Activated CD4-positive, alpha-beta memory T cell treated with anti-CD3 and anti-CD28 coated beads, Interleukin-2, amount 10 ng/mL, durations not matched to agents 7 days and 5 days (primary cell): ENCODE measurements at regions of chr9 and their contacts with region 1.

Region 1: GRCh38 chr9:114930056-114930812 is at the start of gene TNFSF8:
- DNase-seq: peak; percentile 83
- H3K4me3 Mint-ChIP-seq: peak within 1 kb of the TSS; percentile 94
- H3K27ac Mint-ChIP-seq: peak within 1 kb of the TSS; percentile 96
- H3K4me1 Mint-ChIP-seq: peaks cover 53% of the 10 kb centered on the region
- H3K27me3 Mint-ChIP-seq: peaks cover 2% of the 10 kb centered on the region
- total RNA-seq, gene TNFSF8: 34.6 to 34.8 TPM

Region 2: GRCh38 chr9:114385412-114386181 is 544.6 kb before region 1 on chr9:
- CTCF ChIA-PET with region 1: interaction called, 3 read pairs
- POLR2A ChIA-PET with region 1: interaction called, 28 read pairs
- DNase-seq: peak; percentile 93
- H3K4me3 Mint-ChIP-seq: peak overlapping the region; percentile 100
- H3K27ac Mint-ChIP-seq: peak overlapping the region; percentile 98
- H3K4me1 Mint-ChIP-seq: peaks cover 58% of the 10 kb centered on the region
- H3K27me3 Mint-ChIP-seq: no peaks in the 10 kb centered on the region

Region 3: DNA sequence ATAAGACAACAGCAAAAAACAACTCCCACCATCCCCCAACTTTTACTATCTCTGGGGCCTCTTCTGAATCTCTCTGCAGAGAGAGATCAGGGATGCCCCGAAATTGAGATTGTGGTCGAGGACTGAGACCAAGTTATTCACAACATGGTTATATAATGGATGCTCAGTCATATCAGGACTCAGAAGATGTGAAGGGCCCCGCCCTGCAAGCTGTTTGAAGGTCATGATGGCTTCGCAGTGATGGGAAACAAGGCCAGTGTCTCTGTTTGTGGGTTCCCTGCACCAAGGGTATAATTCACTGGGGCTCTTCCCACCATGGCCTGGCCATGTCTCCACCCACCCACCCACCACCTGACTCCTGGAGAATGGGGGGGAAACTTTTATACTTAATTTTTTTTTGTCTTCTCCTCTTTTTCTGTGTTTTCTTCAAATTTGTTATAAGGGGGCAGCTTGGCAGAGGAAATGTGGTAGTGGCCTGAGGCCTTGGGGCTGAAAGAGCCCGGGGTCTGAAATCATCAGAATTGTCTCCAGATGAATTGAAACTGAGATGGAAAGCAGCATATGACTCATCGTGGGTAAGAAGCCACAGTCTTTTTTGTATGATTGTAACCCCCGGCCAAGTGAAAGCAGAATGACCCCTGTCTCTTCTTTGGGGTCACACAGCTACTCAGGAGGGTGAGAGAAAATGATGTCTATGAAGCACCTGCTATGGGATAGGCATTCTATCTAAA is 233.3 kb before region 1 on chr9:
- CTCF ChIA-PET with region 1: interaction called, 3 read pairs
- POLR2A ChIA-PET with region 1: interaction called, 106 read pairs
- DNase-seq: peak; percentile 85
- H3K4me3 Mint-ChIP-seq: peak overlapping the region; percentile 39
- H3K27ac Mint-ChIP-seq: peak overlapping the region; percentile 97
- H3K4me1 Mint-ChIP-seq: peaks cover 79% of the 10 kb centered on the region
- H3K27me3 Mint-ChIP-seq: peaks cover 34% of the 10 kb centered on the region

Region 4: GRCh38 chr9:114889802-114890251 is 40.4 kb before region 1 on chr9:
- CTCF ChIA-PET with region 1: interaction called, 5 read pairs
- POLR2A ChIA-PET with region 1: interaction called, 18 read pairs
- DNase-seq: peak; percentile 33
- H3K4me3 Mint-ChIP-seq: no peak overlapping the region
- H3K27ac Mint-ChIP-seq: no peak overlapping the region
- H3K4me1 Mint-ChIP-seq: peaks cover 44% of the 10 kb centered on the region
- H3K27me3 Mint-ChIP-seq: no peaks in the 10 kb centered on the region

Region 5: DNA sequence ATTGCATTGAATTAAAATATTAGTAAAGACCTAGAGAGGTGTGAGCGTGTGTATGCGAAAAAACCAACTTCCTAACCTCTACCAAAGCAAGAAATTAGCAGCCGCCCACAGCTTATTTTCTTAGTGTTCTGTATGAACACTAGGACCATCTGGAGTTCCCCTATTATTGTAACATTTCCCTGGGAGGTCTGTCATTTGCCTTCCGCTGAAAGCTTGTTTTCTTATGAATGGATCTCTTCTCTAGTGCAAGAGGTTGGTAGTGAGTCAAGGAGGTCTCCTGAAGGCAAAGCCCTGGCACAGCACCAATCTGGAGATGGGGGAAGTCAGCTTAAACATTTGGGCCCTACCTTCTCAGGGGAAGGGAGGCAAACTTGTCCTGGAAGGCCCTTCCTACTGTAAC is 10.6 kb before region 1 on chr9:
- CTCF ChIA-PET with region 1: interaction called, 4 read pairs
- POLR2A ChIA-PET with region 1: interaction called, 373 read pairs
- DNase-seq: no peak
- H3K4me3 Mint-ChIP-seq: no peak overlapping the region
- H3K27ac Mint-ChIP-seq: no peak overlapping the region
- H3K4me1 Mint-ChIP-seq: peaks cover 78% of the 10 kb centered on the region
- H3K27me3 Mint-ChIP-seq: no peaks in the 10 kb centered on the region

Region 6: GRCh38 chr9:115008536-115009270 is 78.5 kb after region 1 on chr9:
- CTCF ChIA-PET with region 1: interaction called, 6 read pairs
- POLR2A ChIA-PET with region 1: interaction called, 69 read pairs
- DNase-seq: no peak
- H3K4me3 Mint-ChIP-seq: no peak overlapping the region
- H3K27ac Mint-ChIP-seq: no peak overlapping the region
- H3K4me1 Mint-ChIP-seq: peaks cover 61% of the 10 kb centered on the region
- H3K27me3 Mint-ChIP-seq: peaks cover 8% of the 10 kb centered on the region